Endothelial cell of umbilical vein (primary cell): ENCODE measurements at regions of chr10 and their contacts with region 1.

Region 1: DNA sequence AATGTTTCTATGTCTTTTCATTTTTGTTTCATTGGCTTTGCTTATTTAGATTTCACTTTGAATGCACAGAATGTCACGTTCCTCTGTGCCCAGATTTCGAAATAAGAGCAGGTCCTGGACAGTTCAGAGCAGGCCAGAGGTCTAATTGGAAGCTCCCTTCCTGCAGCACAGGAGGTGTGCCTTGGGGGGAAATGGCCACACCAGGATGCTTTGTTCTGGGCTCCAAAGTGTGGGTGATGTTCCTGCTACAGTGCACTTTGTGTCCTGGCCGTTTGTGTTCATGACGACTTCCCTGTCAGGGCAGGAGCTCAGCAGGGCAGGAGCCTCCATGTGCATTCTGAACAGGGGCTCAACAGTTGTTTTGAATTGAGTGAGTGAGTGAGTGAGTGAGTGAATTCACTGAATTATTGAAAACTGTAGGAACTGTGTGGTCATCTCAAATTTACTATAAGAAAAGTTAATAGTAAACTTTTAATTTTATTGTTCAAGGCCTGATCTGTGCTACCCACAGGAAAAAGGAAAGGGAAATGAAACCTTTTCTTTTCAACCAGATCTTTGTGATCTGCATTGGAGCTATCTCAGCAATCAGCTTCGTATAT is 109.5 kb upstream of the GJD4 start:
- DNase-seq: peak; percentile 34
- H3K4me3 ChIP-seq: no peak overlapping the region
- H3K27ac ChIP-seq: peak overlapping the region; percentile 36
- H3K4me1 ChIP-seq: peaks cover 22% of the 10 kb centered on the region
- H3K27me3 ChIP-seq: no peaks in the 10 kb centered on the region
- CTCF ChIP-seq: no peak
- POLR2A ChIP-seq: no peak

Region 2: DNA sequence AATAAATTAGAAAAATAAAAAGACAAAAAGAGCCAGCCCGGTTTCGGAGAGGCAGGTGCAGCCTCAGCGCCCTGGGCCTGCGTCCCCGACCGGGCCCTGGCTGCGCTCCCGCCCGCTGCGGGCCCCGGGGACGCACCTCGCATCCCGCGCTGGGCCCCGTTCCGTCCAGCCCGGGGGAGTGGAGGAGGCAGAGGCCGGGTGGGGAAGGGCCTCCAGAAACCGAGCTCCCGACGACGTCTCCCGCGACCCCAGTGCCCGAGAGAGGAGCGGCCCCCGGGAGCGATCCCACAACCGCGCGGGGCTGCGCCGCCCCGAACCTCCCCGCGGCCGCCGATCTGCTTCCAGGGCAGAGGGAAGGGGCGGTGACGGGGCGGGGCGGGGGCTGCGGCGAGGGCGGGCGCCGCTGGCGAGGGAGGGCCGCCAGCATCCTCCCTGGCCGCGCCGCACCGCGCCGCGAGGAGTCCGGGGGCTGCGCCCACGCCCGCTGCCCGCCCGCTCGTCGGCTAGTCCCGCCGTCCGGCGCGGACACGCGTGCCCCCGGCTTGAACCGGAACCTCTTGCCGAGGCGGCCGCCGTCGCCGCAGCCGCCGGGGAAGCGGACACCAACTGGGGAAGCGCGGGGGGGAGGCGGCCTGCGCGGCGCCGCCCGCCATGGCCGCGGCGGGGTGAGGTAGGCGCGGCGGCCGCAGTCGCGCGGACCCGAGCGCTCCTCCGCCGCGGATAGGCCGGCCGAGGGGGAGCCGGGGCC is 159.4 kb before region 1 on chr10 and contains the start of gene CCNY:
- CTCF ChIA-PET with region 1: no interaction called
- POLR2A ChIA-PET with region 1: no interaction called
- dilution Hi-C with region 1: no loop called
- intact Hi-C with region 1: loop called (anchors 2 kb)
- DNase-seq: peak; percentile 67
- H3K4me3 ChIP-seq: peak within 1 kb of the TSS; percentile 72 to 97 (median 94)
- H3K27ac ChIP-seq: peak within 1 kb of the TSS; percentile 63
- H3K4me1 ChIP-seq: peaks cover 45% of the 10 kb centered on the region
- H3K27me3 ChIP-seq: no peaks in the 10 kb centered on the region
- CTCF ChIP-seq: no peak
- POLR2A ChIP-seq: peak; percentile 62
- total RNA-seq, gene CCNY: 99.3 and 107 TPM in 2 replicates